ENCODE measurements at regions of chr9 and their contacts with region 1.

Region 1: GRCh38 chr9:35954942-35955546 is 2.9 kb downstream of the OR2S2 start:
- DNase-seq: peak in 3 of 6 donors; percentile 33 to 60 (median 34)
- ATAC-seq: peak; percentile 73 to 96 (median 90)
- H3K4me3 ChIP-seq: no peak overlapping the region
- H3K27ac ChIP-seq: no peak overlapping the region
- H3K4me1 ChIP-seq: no peaks in the 10 kb centered on the region
- H3K27me3 ChIP-seq: peaks cover 0 to 5% (median 0%) of the 10 kb centered on the region in 4 donors
- CTCF ChIP-seq: peak in 3 of 4 donors; percentile 66 to 87 (median 85)

Region 2: DNA sequence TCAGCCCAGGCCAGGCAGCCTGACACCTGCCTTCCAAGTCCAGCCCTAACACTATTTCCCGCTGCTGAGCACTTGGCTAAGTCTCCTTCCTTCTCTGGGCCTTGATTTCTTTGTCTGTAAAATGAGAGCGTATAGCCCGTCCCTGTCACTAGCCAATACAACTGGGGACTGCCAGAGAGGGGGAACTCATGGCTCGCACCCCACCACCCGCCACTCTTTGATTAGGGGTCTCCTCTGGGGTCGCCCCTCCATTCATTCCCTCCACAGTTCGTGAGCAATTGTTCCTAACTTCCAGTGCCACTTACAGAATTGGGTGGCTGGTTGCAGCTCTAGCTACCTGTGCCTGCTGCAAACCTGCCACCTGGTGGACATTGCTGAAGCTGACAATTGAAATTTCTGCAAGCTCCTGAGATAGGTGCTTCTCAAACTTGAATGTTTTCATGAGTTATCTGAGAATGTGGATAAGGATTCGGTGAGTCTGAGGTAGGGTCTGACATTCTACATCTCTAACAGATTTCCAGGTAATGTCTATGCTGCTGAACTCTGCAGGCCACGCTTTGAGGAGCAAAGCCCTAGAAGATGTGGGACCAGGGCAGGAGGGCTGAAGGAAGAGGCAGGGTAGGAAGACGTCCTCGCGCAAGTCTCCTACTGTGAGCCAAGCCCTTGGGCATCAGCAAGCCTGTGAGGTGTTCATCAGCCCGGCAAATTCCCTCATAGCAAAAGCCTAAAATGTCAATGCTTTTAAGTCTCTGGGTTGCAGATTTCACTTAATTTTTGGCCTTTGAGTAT is 68.4 kb after region 1 on chr9:
- intact Hi-C with region 1: loop called in 2 of 3 experiments (anchors 5 to 10 kb)
- DNase-seq: peak; percentile 42 to 73 (median 58)
- ATAC-seq: peak; percentile 58 to 94 (median 89)
- H3K4me3 ChIP-seq: no peak overlapping the region
- H3K27ac ChIP-seq: no peak overlapping the region
- H3K4me1 ChIP-seq: no peaks in the 10 kb centered on the region
- H3K27me3 ChIP-seq: no peaks in the 10 kb centered on the region
- CTCF ChIP-seq: peak; percentile 64 to 78 (median 70)

Region 3: GRCh38 chr9:36053971-36054370 is 98.9 kb after region 1 on chr9:
- intact Hi-C with region 1: no loop called
- DNase-seq: no peak
- ATAC-seq: no peak
- H3K4me3 ChIP-seq: no peak overlapping the region
- H3K27ac ChIP-seq: no peak overlapping the region
- H3K4me1 ChIP-seq: peaks cover 0 to 3% (median 0%) of the 10 kb centered on the region in 3 donors
- H3K27me3 ChIP-seq: no peaks in the 10 kb centered on the region
- CTCF ChIP-seq: no peak

Measured in pancreas (tissue), 10 donors.